ENCODE measurements at regions of chr2 and their contacts with region 1.

Region 1: DNA sequence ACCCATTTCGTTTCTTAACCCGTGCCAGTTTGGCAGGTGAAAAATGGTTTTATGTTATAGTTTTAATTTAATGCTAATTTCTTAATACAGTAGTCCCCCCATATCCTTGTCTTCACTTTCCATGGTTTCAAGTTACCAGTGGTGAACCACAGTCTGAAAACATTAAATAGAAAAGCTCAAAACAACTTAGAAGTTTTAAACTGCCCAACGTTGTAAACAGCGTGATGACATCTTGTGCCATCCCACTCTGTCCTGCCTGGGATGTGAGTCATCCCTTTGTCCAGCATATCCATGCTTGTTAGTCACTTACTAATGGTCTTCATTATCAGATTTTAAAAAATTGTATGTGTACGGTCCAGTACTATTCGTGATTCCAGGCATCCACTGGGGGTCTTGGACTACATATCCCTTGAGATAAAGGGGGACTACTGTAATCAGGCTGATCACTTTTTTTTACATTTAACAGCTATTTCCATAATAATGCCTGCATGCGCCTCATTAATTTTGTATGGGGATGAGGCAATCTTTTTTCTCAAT is 31.9 kb downstream of the SLC66A3 start:
- DNase-seq: no peak
- ATAC-seq: no peak
- H3K4me3 ChIP-seq: no peak overlapping the region
- H3K4me3 Mint-ChIP-seq: no peak overlapping the region
- H3K27ac ChIP-seq: no peak overlapping the region
- H3K27ac Mint-ChIP-seq: no peak overlapping the region
- H3K4me1 ChIP-seq: no peaks in the 10 kb centered on the region
- H3K4me1 Mint-ChIP-seq: no peaks in the 10 kb centered on the region
- H3K27me3 ChIP-seq: no peaks in the 10 kb centered on the region
- H3K27me3 Mint-ChIP-seq: no peaks in the 10 kb centered on the region
- CTCF ChIP-seq: no peak

Region 2: DNA sequence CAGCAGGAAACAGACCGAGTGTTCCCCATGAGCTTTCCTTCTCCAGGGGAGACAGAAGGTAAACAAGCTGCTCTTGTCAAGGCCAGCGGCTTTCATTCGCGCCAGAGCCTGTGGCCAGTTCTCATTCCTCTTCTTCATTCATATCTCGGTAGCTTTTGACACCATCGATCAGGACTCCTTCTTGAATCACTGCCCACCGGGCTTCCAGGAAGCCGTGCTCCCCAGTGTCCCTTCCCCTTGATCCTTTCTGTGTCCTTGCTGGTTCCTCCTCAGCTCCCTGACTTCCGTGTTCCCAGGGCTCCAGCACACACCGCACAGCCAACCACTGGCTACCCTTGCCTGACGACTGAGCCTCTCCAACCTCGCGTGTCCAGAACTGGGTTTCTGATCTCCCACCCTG is 17.8 kb before region 1 on chr2:
- CTCF ChIA-PET with region 1: no interaction called
- POLR2A ChIA-PET with region 1: no interaction called
- intact Hi-C with region 1: no loop called
- DNase-seq: no peak
- ATAC-seq: no peak
- H3K4me3 ChIP-seq: no peak overlapping the region
- H3K4me3 Mint-ChIP-seq: no peak overlapping the region
- H3K27ac ChIP-seq: no peak overlapping the region
- H3K27ac Mint-ChIP-seq: no peak overlapping the region
- H3K4me1 ChIP-seq: no peaks in the 10 kb centered on the region
- H3K4me1 Mint-ChIP-seq: no peaks in the 10 kb centered on the region
- H3K27me3 ChIP-seq: no peaks in the 10 kb centered on the region
- H3K27me3 Mint-ChIP-seq: no peaks in the 10 kb centered on the region
- CTCF ChIP-seq: no peak

Region 3: DNA sequence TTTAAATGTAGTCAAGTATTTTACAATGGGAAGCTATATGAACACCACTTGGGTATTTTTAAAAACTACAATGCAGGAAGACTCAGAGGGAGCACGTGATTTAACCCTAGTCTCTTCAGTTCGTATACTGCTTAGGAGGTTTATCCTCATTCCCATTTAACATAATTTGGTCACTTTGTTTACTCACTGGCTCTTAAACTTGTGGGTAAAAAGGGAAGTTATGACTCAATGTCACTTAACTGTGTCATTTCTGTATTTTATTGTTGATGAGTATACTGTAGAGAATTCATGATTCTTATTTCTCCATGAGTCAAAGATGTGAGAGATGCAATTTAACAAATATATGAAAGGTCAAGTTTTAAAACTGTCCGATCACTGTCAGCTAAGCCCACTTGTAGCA is 16.3 kb after region 1 on chr2:
- CTCF ChIA-PET with region 1: no interaction called
- POLR2A ChIA-PET with region 1: no interaction called
- intact Hi-C with region 1: loop called in 1 of 2 experiments (anchors 2 kb)
- DNase-seq: peak in 1 of 9 experiments; percentile 7
- ATAC-seq: no peak
- H3K4me3 ChIP-seq: no peak overlapping the region
- H3K4me3 Mint-ChIP-seq: no peak overlapping the region
- H3K27ac ChIP-seq: no peak overlapping the region
- H3K27ac Mint-ChIP-seq: no peak overlapping the region
- H3K4me1 ChIP-seq: no peaks in the 10 kb centered on the region
- H3K4me1 Mint-ChIP-seq: peaks cover 2% of the 10 kb centered on the region
- H3K27me3 ChIP-seq: no peaks in the 10 kb centered on the region
- H3K27me3 Mint-ChIP-seq: no peaks in the 10 kb centered on the region
- CTCF ChIP-seq: no peak

Measured in CD8-positive, alpha-beta T cell (primary cell).